Activated CD4-positive, alpha-beta T cell treated with anti-CD3 and anti-CD28 coated beads for 36 hours (primary cell): ENCODE measurements at regions of chr2 and their contacts with region 1.

Region 1: GRCh38 chr2:6917071-6917760 is at the start of gene RNF144A:
- DNase-seq: peak; percentile 84
- ATAC-seq: peak; percentile 54
- H3K4me3 Mint-ChIP-seq: peak within 1 kb of the TSS; percentile 72
- H3K27ac Mint-ChIP-seq: peak within 1 kb of the TSS; percentile 82
- H3K4me1 Mint-ChIP-seq: peaks cover 79% of the 10 kb centered on the region
- H3K27me3 Mint-ChIP-seq: no peaks in the 10 kb centered on the region
- total RNA-seq, gene RNF144A: 38.6 to 42.7 TPM

Region 2: DNA sequence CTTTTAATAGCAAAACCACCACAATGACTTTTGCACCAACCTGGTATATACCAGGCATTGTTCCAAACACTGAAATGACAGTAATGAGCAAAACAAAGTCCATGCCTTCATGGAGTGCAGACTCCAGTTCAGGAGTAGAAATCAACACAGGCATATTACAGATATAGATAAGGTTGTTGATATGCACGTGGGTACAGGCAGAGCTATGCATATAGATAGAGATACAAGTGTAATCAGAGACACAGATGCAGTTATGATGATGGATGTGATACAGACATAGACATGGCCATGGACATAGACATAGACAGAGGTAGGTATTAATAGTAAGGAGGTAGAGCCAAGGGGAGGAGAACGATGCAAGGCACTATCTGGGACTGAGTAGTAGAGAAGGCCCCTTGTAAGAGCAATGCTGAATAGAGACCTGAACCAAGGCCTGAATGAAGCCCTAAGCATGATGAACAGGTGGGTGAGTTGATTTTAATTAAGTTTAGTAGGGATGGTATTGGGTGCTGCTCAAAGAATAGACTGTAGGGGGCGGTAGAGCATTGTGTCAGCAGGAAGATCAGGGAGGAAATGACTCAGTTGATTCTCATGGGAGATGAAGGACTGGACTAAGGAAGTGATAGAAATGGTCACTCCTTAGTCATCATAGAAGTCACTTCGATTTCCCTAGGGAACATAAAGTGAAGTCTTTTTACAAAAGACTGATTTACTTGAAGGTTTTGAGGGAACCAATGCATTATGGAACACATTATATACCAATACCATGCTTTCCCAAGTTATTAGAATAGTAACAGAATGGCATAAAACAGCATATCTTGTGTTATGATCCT is 90.9 kb before region 1 on chr2:
- CTCF ChIA-PET with region 1: interaction called, 3 read pairs
- POLR2A ChIA-PET with region 1: no interaction called
- intact Hi-C with region 1: loop called (anchors 2 to 5 kb)
- DNase-seq: peak; percentile 78
- ATAC-seq: peak; percentile 97
- H3K4me3 Mint-ChIP-seq: no peak overlapping the region
- H3K27ac Mint-ChIP-seq: no peak overlapping the region
- H3K4me1 Mint-ChIP-seq: peaks cover 9% of the 10 kb centered on the region
- H3K27me3 Mint-ChIP-seq: no peaks in the 10 kb centered on the region